H1 (cell line): ENCODE measurements at regions of chr19 and their contacts with region 1.

Region 1: DNA sequence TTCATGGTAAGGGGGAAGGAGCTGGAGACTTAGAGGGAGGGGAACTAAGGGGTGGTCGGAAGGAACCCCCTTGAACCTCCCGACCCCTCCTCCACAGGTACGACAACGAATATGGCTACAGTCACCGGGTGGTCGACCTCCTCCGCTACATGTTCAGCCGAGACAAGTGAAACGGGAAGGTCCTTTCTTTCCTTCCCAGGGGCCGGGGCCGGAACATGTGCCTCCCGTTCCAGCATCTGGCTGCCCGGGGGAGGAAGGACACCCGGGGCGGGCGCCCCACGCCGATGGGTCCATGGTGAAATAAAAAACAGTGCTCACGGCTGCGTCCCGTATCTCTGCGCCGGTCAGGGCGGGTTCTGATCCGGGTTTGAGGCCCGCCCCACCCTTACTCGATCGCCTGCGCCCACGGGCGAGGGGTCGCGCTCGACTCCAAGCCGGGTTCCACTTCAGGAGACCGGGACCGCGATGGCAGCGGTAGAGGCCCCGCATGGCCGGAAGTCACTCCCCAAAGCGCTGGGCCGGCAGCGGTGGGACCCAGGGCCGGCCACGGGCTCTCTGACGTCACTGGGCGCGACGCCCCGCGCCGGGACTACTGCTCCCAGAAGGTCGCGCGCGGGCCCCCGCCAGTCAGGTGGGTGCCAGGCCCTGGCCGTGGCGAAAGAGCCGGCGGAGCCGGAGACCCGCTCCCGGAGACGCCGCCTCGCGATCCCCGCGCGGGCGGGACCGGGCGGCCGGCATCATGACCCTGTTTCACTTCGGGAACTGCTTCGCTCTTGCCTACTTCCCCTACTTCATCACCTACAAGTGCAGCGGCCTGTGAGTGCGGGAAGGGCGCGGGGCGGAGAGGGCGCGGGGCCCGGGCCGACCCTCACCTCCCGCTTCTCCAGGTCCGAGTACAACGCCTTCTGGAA is at the start of gene TMEM147:
- DNase-seq: peak; percentile 50 to 95
- H3K4me3 ChIP-seq: peak within 1 kb of the TSS; percentile 88 to 97 (median 94)
- H3K27ac ChIP-seq: peak within 1 kb of the TSS; percentile 78; the same call in 1 of the 2 replicates
- H3K4me1 ChIP-seq: peaks cover 0 to 13% (median 2%) of the 10 kb centered on the region in 4 experiments; a peak in 3 of 7 replicates
- H3K27me3 ChIP-seq: no peaks in the 10 kb centered on the region
- CTCF ChIP-seq: no peak
- EP300 ChIP-seq: no peak
- POLR2A ChIP-seq: peak in 1 of 2 experiments; percentile 88; a peak in 2 of 3 replicates
- RAD21 ChIP-seq: no peak
- total RNA-seq, gene TMEM147: 157 and 159 TPM in 2 replicates

Region 2: DNA sequence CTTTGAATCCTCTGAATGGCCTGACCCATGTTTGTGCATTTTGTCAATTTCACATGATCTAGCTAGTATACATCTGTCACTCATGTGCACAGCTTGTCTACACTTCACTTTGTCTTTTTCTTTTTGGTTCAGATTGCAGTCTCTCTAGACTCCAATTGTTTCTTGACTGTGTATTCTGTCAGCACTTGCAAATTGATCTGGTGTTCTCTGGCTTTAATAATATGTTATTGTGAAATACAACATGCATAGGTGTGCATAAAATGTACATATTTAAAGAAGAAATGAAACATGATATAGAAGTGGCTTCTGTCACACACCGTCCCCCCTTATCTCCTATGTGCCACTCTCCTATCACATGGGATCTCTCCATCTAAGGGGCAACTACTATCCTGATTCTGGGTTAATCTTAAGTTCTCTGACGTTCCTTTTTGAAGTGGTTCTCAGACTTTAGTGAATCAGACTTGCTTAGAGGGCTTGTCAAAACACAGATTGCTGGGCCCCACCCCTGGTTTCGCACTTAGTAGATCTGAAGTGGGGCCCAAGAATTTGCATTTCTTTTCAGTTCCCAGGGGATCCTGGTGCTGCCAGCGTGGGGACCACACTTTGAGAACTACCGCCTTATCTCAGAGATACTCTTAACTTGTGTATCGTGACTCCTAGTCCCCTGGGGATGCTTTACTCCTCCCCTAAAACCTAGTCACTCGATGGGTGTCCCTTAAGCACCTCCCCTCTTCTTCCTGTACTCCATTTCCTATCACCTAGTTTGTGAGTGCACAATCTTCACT is 60.8 kb before region 1 on chr19:
- CTCF ChIA-PET with region 1: no interaction called
- POLR2A ChIA-PET with region 1: no interaction called
- DNase-seq: no peak
- H3K4me3 ChIP-seq: no peak overlapping the region
- H3K27ac ChIP-seq: no peak overlapping the region
- H3K4me1 ChIP-seq: no peaks in the 10 kb centered on the region
- H3K27me3 ChIP-seq: no peaks in the 10 kb centered on the region; a peak in 1 of 7 replicates
- CTCF ChIP-seq: no peak
- EP300 ChIP-seq: no peak
- POLR2A ChIP-seq: no peak
- RAD21 ChIP-seq: no peak

Region 3: GRCh38 chr19:35557539-35558399 is 12.5 kb after region 1 on chr19:
- CTCF ChIA-PET with region 1: interaction called, 14 read pairs
- POLR2A ChIA-PET with region 1: interaction called, 8 read pairs
- DNase-seq: peak; percentile 86 to 99
- H3K4me3 ChIP-seq: peak overlapping the region; percentile 52 to 65 (median 62)
- H3K27ac ChIP-seq: no peak overlapping the region
- H3K4me1 ChIP-seq: peaks cover 0 to 6% (median 4%) of the 10 kb centered on the region in 4 experiments; a peak in 3 of 7 replicates
- H3K27me3 ChIP-seq: peaks cover 0 to 16% (median 12%) of the 10 kb centered on the region in 4 experiments; a peak in 5 of 7 replicates
- CTCF ChIP-seq: peak in 2 of 3 experiments; percentile 4 to 18; a peak in 1 of 4 replicates
- EP300 ChIP-seq: no peak
- POLR2A ChIP-seq: peak in 1 of 2 experiments; percentile 65; a peak in 1 of 3 replicates
- RAD21 ChIP-seq: peak in 1 of 2 experiments; percentile 12; a peak in 2 of 4 replicates

Region 4: DNA sequence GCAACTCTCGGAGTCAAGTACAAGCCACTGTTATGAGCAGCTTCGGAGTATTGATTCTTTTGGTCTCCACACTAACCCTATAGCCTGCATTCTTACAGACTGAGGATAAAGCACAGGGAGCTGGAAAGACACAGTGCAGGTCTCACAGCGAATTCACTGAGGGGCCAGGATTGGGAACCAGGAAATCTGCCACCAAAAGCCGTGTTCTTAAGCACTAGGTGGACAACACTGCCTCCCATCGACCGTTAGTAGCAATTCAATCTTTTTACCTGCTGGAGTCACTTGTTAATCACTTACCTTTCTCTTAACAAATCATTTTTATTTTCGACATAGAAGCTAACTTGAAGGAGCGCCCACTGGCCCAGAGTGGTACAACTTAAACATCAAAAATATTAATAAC is 47.0 kb after region 1 on chr19:
- CTCF ChIA-PET with region 1: interaction called, 65 read pairs
- POLR2A ChIA-PET with region 1: interaction called, 3 read pairs
- DNase-seq: peak; percentile 15 to 53
- H3K4me3 ChIP-seq: no peak overlapping the region
- H3K27ac ChIP-seq: no peak overlapping the region
- H3K4me1 ChIP-seq: no peaks in the 10 kb centered on the region
- H3K27me3 ChIP-seq: no peaks in the 10 kb centered on the region; a peak in 1 of 7 replicates
- CTCF ChIP-seq: peak; percentile 33 to 84 (median 77)
- EP300 ChIP-seq: no peak
- POLR2A ChIP-seq: no peak
- RAD21 ChIP-seq: peak; percentile 87 to 89

Region 5: DNA sequence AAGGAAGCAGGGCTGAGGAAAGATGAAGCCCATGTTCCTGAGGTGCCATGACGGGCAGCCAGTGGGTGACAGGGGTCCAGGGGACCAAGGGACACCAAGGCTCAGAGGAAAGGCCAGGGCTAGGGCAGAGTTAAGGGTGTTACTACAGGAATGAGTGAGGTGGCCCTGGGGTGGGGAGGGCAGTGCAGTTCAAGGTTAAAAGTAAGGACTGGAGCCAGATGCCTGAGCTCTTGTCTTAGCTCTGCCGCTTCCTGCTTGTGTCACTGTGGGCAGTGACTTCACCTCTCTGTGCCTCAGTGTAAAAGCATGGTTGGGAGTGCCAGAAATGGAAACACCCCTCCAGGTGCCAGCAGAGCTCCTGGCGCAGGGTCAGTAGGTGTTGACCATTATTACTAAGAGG is 91.4 kb after region 1 on chr19:
- CTCF ChIA-PET with region 1: interaction called, 10 read pairs
- POLR2A ChIA-PET with region 1: no interaction called
- DNase-seq: no peak
- H3K4me3 ChIP-seq: no peak overlapping the region
- H3K27ac ChIP-seq: no peak overlapping the region
- H3K4me1 ChIP-seq: peaks cover 4 to 12% (median 7%) of the 10 kb centered on the region in 4 experiments
- H3K27me3 ChIP-seq: no peaks in the 10 kb centered on the region
- CTCF ChIP-seq: no peak
- EP300 ChIP-seq: no peak
- POLR2A ChIP-seq: no peak
- RAD21 ChIP-seq: no peak

Region 6: DNA sequence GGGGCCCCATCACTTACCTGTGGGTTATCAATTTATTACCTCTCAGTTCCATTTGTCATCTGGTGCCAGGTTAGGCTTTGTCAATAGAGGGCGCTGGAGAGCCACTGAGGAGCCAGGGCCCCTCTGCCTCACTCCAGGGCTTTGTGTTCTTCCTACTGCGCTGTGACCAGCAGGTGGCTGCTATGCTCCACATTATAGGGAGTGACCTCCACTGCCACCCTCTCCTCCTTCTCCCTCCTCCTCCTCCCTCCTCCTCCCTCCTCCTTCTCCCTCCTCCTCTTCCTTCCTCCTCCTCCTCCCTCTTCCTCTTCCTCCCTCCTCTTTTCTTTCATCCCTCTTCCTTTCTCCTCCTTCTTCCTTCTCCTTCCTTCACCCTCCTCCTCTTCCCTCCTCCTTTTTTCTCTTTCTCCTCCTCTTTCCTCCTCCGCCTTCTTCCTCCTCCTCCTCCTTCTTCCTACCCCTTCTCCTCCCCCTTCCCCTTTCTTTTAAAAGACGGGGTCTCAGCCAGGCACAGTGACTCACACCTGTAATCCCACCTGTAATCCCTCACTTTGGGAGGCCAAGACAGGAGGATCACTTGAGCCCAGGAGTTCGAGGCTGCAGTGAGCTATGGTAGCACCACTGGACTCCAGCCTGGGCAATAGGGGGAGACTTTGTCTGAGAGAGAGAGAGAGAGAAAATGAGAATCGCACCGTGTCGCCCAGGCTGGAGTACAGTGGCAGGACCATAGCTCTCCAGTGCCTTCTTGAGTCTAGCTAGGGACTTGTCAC is 148.8 kb after region 1 on chr19:
- CTCF ChIA-PET with region 1: interaction called, 18 read pairs
- POLR2A ChIA-PET with region 1: no interaction called
- DNase-seq: peak in 1 of 2 experiments; percentile 93
- H3K4me3 ChIP-seq: no peak overlapping the region
- H3K27ac ChIP-seq: no peak overlapping the region
- H3K4me1 ChIP-seq: no peaks in the 10 kb centered on the region
- H3K27me3 ChIP-seq: no peaks in the 10 kb centered on the region
- CTCF ChIP-seq: peak; percentile 99
- EP300 ChIP-seq: no peak
- POLR2A ChIP-seq: no peak
- RAD21 ChIP-seq: peak; percentile 91 to 97